ENCODE measurements at regions of chr12 and their contacts with region 1.

Region 1: GRCh38 chr12:64551698-64552097 is 58.6 kb upstream of the RASSF3 start:
- DNase-seq: no peak
- H3K4me3 ChIP-seq: no peak overlapping the region
- H3K27ac ChIP-seq: peak overlapping the region; percentile 21
- H3K4me1 ChIP-seq: peaks cover 8% of the 10 kb centered on the region
- H3K27me3 ChIP-seq: no peaks in the 10 kb centered on the region
- CTCF ChIP-seq: no peak
- POLR2A ChIP-seq: no peak

Region 2: GRCh38 chr12:63276537-63277365 is 1274.9 kb before region 1 on chr12:
- intact Hi-C with region 1: no loop called
- DNase-seq: no peak
- H3K4me3 ChIP-seq: no peak overlapping the region
- H3K27ac ChIP-seq: no peak overlapping the region
- H3K4me1 ChIP-seq: no peaks in the 10 kb centered on the region
- H3K27me3 ChIP-seq: no peaks in the 10 kb centered on the region
- CTCF ChIP-seq: peak in 1 of 3 experiments; percentile 21
- POLR2A ChIP-seq: no peak

Region 3: GRCh38 chr12:64029013-64029857 is 522.5 kb before region 1 on chr12:
- intact Hi-C with region 1: no loop called
- DNase-seq: no peak
- H3K4me3 ChIP-seq: no peak overlapping the region
- H3K27ac ChIP-seq: no peak overlapping the region
- H3K4me1 ChIP-seq: no peaks in the 10 kb centered on the region
- H3K27me3 ChIP-seq: no peaks in the 10 kb centered on the region
- CTCF ChIP-seq: no peak
- POLR2A ChIP-seq: no peak

Region 4: DNA sequence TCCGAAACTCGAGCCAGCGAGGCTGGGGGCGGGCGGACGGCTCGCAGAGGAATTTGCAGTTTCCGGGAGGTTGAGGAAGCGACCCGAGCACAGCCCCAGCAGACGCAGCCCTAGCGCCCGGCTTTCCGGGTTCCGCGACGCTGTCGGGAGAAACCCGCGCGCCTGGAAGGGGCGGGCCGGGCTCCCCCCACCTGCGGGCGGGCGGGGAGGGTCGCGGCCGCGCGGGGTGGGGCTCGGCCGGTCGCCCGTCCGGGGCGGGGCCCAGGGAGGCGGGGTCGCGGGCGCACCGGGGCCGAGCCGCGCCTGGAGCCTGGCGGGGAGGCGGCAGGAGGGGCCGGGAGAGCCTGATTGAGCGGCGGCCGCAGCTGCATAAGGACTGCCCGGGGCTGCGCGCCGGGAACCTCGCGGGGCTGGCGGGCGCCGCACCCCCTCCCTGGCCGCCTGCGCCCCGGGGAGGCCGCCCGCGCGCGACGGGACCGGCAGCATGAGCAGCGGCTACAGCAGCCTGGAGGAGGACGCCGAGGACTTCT is 58.5 kb after region 1 on chr12 and contains the start of gene RASSF3:
- intact Hi-C with region 1: loop called (anchors 10 kb)
- DNase-seq: no peak
- H3K4me3 ChIP-seq: peak within 1 kb of the TSS; percentile 91 to 94
- H3K27ac ChIP-seq: peak within 1 kb of the TSS; percentile 93
- H3K4me1 ChIP-seq: peaks cover 12% of the 10 kb centered on the region
- H3K27me3 ChIP-seq: no peaks in the 10 kb centered on the region
- CTCF ChIP-seq: no peak
- POLR2A ChIP-seq: peak in 1 of 2 donors; percentile 37
- total RNA-seq, gene RASSF3: 29.5 TPM

Region 5: DNA sequence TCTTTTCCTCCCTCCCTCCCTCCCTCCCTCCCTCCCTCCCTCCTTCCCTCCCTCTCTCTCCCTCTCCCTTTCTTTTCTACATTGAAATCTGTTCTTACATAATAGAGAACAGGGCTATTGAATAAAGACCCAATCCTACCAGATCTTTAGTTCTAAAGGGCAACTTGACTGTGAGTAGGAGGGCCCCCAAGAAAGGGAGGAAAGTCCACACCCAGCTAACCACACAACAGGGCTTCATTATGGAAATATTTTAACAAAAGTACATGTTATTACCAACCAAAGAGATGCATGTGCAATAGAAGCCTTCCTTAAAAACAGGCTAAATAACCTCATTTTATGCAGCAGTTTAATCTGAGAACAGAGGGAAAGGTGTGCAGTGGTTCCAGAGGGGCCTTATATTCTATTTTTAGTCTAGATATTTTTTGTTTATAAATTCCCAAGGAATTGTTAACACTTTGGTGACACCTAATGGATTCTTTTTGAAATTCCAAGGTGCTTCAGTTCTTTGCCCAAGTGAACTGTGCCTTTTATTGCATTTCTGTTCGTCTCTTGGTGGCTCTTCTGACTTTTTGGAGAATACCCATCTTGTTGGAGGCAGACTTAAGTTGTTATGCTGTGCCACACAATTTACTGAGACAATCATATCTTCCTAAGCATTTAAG is 144.5 kb after region 1 on chr12:
- intact Hi-C with region 1: loop called (anchors 2 kb)
- DNase-seq: no peak
- H3K4me3 ChIP-seq: no peak overlapping the region
- H3K27ac ChIP-seq: no peak overlapping the region
- H3K4me1 ChIP-seq: peaks cover 8% of the 10 kb centered on the region
- H3K27me3 ChIP-seq: no peaks in the 10 kb centered on the region
- CTCF ChIP-seq: peak in 2 of 3 experiments; percentile 23 to 32
- POLR2A ChIP-seq: no peak